Activated T-helper 2 cell treated with anti-CD3 and anti-CD28 coated beads, Interferon-gamma antibody, Interleukin-2, Interleukin-4, amounts not matched to agents 10 μg/mL and 5 μg/mL and 100 μg/mL, durations not matched to agents 14 hours and 24 hours and 36 hours (primary cell): ENCODE measurements at regions of chr12 and their contacts with region 1.

Region 1: GRCh38 chr12:93677195-93678064 is at the start of gene CRADD:
- DNase-seq: peak; percentile 85
- H3K4me3 Mint-ChIP-seq: peak within 1 kb of the TSS; percentile 94
- H3K27ac Mint-ChIP-seq: peak within 1 kb of the TSS; percentile 99
- H3K4me1 Mint-ChIP-seq: peaks cover 30% of the 10 kb centered on the region
- H3K27me3 Mint-ChIP-seq: peaks cover 9% of the 10 kb centered on the region
- total RNA-seq, gene CRADD: 10.2 and 10.7 TPM in 2 replicates

Region 2: GRCh38 chr12:93378373-93379325 is 298.8 kb before region 1 on chr12:
- intact Hi-C with region 1: loop called (anchors 5 kb)
- DNase-seq: peak; percentile 55
- H3K4me3 Mint-ChIP-seq: peak overlapping the region; percentile 100
- H3K27ac Mint-ChIP-seq: peak overlapping the region; percentile 100
- H3K4me1 Mint-ChIP-seq: peaks cover 40% of the 10 kb centered on the region
- H3K27me3 Mint-ChIP-seq: peaks cover 2% of the 10 kb centered on the region

Region 3: GRCh38 chr12:93591137-93591868 is 86.1 kb before region 1 on chr12:
- intact Hi-C with region 1: loop called (anchors 5 kb)
- DNase-seq: peak; percentile 25
- H3K4me3 Mint-ChIP-seq: peak overlapping the region; percentile 87
- H3K27ac Mint-ChIP-seq: peak overlapping the region; percentile 14
- H3K4me1 Mint-ChIP-seq: peaks cover 36% of the 10 kb centered on the region
- H3K27me3 Mint-ChIP-seq: peaks cover 53% of the 10 kb centered on the region

Region 4: GRCh38 chr12:93785262-93786010 is 108.0 kb after region 1 on chr12:
- intact Hi-C with region 1: loop called (anchors 2 kb)
- DNase-seq: peak; percentile 37
- H3K4me3 Mint-ChIP-seq: peak overlapping the region; percentile 50
- H3K27ac Mint-ChIP-seq: peak overlapping the region; percentile 92
- H3K4me1 Mint-ChIP-seq: peaks cover 55% of the 10 kb centered on the region
- H3K27me3 Mint-ChIP-seq: no peaks in the 10 kb centered on the region

Region 5: DNA sequence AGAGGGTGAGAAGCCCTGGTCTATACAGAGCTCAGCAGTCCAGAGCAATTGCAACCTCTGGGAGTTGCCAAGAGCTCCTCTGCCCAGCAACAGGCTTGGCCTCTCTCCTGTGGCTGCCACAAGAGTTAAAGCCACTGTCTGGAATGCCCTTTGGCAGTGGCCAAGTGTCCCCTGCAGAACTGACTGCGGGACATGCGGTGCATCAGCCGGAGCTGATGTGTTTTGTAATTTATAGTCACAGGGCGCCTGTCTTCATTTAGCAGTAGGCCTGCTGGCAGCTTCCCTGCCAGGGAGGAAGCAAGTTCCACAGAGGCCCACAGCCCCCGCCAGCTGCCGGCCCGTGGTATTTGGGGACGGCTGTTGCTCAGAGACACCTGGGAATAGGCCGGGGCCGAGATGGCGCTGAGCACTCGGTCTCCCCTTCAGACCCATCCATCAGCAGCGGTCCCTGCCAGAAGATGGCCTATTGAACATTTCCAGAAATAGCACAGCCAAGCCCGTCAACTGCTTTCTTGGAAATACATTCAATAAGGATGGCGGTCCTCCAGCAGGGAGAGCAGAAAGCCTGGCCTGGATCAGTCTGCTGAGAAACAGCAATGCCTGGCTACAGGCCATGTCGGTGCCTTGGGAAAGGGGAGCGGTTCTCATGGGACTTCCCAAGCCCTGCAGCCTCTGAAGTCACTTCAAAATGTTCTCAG is 217.1 kb after region 1 on chr12:
- intact Hi-C with region 1: loop called (anchors 2 kb)
- DNase-seq: no peak
- H3K4me3 Mint-ChIP-seq: no peak overlapping the region
- H3K27ac Mint-ChIP-seq: no peak overlapping the region
- H3K4me1 Mint-ChIP-seq: peaks cover 34% of the 10 kb centered on the region
- H3K27me3 Mint-ChIP-seq: peaks cover 1% of the 10 kb centered on the region

Region 6: GRCh38 chr12:93908846-93909567 is 231.6 kb after region 1 on chr12:
- intact Hi-C with region 1: no loop called
- DNase-seq: no peak
- H3K4me3 Mint-ChIP-seq: no peak overlapping the region
- H3K27ac Mint-ChIP-seq: no peak overlapping the region
- H3K4me1 Mint-ChIP-seq: peaks cover 9% of the 10 kb centered on the region
- H3K27me3 Mint-ChIP-seq: peaks cover 3% of the 10 kb centered on the region